ENCODE measurements at regions of chr4 and their contacts with region 1.

Region 1: GRCh38 chr4:155442267-155443105 is 65.7 kb upstream of the MAP9 start:
- DNase-seq: peak; percentile 91
- ATAC-seq: peak; percentile 96

Region 2: GRCh38 chr4:155376387-155377268 is 65.9 kb before region 1 on chr4 and contains the start of gene MAP9:
- intact Hi-C with region 1: no loop called
- DNase-seq: peak; percentile 89
- ATAC-seq: peak; percentile 99
- total RNA-seq, gene MAP9: 9.9 TPM

Region 3: DNA sequence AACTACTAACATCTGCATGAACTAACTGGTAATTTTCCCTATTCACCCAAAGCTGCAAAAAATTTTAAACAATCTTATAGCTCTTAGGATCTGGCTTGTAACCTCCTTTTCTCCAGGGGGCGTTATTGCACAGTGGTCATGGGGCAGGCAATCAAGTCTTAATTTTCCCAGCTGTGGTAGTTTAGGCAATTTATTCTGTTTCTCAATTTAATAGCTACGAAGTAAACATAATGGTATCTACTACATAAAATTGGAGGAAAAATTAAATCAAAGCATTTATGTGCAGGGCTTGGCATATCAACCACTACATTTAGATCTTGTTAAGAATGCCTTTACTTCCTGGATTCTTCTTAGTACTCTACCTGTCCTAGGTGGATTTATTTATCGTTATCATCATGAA is 86.8 kb after region 1 on chr4:
- intact Hi-C with region 1: no loop called
- DNase-seq: no peak
- ATAC-seq: no peak

Region 4: GRCh38 chr4:155667568-155668511 is 225.4 kb after region 1 on chr4:
- intact Hi-C with region 1: loop called (anchors 5 kb)
- DNase-seq: peak; percentile 74
- ATAC-seq: peak; percentile 83

Region 5: DNA sequence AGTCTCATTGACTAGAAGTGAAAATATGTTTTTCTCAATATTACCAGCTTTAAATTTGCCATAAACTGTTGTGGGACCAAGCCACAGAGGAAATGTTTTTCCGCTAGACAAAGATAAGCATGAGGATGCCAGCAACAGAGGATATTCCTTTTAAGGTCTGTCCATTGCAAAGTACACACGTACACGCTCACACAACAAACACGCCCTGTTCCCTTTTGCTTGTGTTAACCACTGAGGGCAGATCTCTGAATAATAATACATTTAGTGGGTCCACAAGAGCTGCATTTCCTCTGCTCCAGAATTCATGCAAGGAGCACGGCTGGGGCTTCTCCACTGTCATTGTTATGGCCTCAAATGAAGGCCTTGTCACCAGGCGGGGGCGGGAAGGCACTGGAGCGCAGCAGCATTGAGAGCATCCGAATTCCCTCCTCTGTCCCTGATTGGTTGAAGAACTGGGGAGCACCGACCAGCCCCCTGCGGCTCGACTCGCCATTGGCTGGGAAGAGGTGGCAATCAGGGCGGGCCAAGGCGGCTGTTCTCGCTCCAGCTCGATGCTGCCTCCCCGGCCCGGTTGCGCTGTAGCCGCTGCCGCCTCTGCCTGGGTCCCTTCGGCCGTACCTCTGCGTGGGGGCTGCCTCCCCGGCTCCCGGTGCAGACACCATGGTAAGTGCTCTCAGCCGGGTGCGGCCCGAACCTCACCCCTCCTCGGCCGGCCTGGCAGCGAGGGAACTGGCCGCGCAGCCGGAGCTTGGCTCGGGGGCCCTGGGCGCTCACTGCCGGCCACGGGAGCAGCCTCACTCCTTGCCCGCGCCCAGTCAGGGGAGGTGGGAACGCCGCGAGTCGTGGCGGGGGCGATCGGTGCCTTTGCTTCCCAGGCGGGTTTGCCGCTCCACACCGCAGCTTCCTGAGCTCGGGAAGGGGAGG is 316.3 kb after region 1 on chr4 and contains the start of gene GUCY1B1:
- intact Hi-C with region 1: no loop called
- DNase-seq: peak; percentile 96
- ATAC-seq: peak; percentile 98
- total RNA-seq, gene GUCY1B1: 31.3 TPM

Region 6: GRCh38 chr4:155787113-155787710 is 344.7 kb after region 1 on chr4:
- intact Hi-C with region 1: loop called (anchors 1 kb)
- DNase-seq: no peak
- ATAC-seq: peak; percentile 90